Naive thymus-derived CD4-positive, alpha-beta T cell (primary cell): ENCODE measurements at regions of chr10 and their contacts with region 1.

Region 1: DNA sequence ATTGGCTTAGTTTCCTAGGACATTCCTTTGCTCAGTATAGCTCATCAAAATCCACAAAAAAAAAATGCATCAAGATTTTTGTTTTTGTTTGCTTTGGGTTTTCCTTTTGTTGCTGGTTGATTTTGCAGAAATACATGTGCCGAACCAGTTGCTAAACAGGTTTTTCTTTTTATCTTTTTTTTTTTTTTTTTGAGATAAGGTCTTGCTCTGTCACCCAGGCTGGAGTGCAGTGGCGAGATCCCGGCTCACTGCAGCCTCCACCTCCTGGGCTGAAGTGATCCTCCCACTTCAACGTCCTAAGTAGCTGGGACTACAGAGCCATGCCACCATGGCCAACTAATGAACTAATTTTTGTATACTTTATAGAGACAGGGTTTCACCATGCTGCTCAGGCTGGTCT is 8.3 kb downstream of the CSTF2T start:
- DNase-seq: no peak
- ATAC-seq: no peak
- H3K4me3 ChIP-seq: no peak overlapping the region
- H3K4me3 Mint-ChIP-seq: no peak overlapping the region
- H3K27ac ChIP-seq: no peak overlapping the region
- H3K27ac Mint-ChIP-seq: no peak overlapping the region
- H3K4me1 ChIP-seq: peaks cover under 1 to 13% of the 10 kb centered on the region in 2 donors
- H3K4me1 Mint-ChIP-seq: peaks cover 6 to 25% (median 21%) of the 10 kb centered on the region in 7 donors
- H3K27me3 ChIP-seq: no peaks in the 10 kb centered on the region
- H3K27me3 Mint-ChIP-seq: peaks cover 0 to 5% (median 0%) of the 10 kb centered on the region in 5 donors

Region 2: DNA sequence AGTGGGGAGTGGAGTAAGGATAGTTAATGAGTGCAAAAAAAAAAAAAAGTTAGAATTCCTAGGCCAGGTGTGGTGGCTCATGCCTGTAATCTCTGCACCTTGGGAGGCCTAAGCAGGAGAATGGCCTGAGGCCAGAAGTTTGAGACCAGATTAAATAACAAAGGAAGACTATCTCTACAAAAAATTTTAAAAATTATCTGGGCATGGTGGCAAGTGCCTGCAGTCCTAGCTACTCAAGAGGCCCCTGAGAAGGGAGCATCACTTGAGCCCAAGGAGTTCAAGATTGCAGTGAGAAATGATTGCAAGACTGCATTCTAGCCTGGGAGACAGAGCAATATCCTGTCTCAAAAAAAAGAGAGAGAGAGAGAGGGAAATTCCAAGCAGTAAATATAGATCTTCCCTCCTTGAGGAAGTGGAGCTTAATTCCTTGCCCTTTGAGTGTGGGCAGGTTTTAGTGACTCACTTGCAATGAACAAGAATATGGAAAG is 27.7 kb after region 1 on chr10:
- CTCF ChIA-PET with region 1: no interaction called
- POLR2A ChIA-PET with region 1: no interaction called
- intact Hi-C with region 1: no loop called
- DNase-seq: no peak
- ATAC-seq: no peak
- H3K4me3 ChIP-seq: no peak overlapping the region
- H3K4me3 Mint-ChIP-seq: no peak overlapping the region
- H3K27ac ChIP-seq: no peak overlapping the region
- H3K27ac Mint-ChIP-seq: no peak overlapping the region
- H3K4me1 ChIP-seq: no peaks in the 10 kb centered on the region
- H3K4me1 Mint-ChIP-seq: peaks cover 0 to 8% (median 0%) of the 10 kb centered on the region in 7 donors
- H3K27me3 ChIP-seq: no peaks in the 10 kb centered on the region
- H3K27me3 Mint-ChIP-seq: peaks cover 8 to 27% (median 9%) of the 10 kb centered on the region in 5 donors

Region 3: DNA sequence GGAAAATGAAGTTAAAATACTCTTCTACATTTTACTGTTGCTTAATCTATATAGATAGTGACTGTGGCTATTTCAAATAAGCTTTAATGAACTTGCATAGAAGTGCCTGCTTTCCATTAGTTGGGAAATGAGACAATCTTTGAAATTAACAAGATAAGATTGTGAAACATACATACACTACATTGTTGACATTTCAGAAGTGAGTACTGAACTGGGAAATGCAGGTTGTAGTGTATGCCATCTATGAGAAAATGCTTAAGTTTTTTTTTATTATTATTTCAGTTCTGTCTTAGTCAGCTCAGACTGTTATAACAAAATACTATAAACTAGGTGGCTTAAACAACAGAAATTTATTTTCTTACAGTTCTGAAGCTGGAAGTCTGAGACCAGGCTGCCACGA is 57.8 kb after region 1 on chr10:
- CTCF ChIA-PET with region 1: no interaction called
- POLR2A ChIA-PET with region 1: no interaction called
- intact Hi-C with region 1: loop called in 1 of 2 experiments (anchors 5 kb)
- DNase-seq: no peak
- ATAC-seq: no peak
- H3K4me3 ChIP-seq: no peak overlapping the region
- H3K4me3 Mint-ChIP-seq: no peak overlapping the region
- H3K27ac ChIP-seq: no peak overlapping the region
- H3K27ac Mint-ChIP-seq: no peak overlapping the region
- H3K4me1 ChIP-seq: no peaks in the 10 kb centered on the region
- H3K4me1 Mint-ChIP-seq: no peaks in the 10 kb centered on the region
- H3K27me3 ChIP-seq: no peaks in the 10 kb centered on the region
- H3K27me3 Mint-ChIP-seq: peaks cover 0 to 4% (median 0%) of the 10 kb centered on the region in 5 donors

Region 4: DNA sequence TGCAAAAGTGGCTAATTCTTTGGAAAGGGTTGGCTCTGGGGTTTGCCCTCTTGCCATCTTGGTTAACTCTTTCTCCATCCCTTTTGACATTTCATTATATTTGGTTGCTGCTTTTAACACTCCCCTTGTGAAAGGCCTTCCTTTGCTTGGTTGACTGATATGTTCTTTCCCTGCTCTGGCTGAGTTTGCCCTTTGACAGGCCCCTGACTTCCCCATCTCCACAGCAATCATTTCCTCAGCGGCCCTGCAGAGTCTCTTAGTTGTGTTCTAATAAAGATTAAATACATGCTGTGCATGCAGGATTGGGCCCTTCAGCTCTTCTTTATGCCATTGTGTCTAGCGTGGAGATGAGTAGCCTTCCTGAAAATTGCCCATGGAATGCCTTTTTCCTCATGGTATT is 92.8 kb after region 1 on chr10:
- CTCF ChIA-PET with region 1: no interaction called
- POLR2A ChIA-PET with region 1: no interaction called
- intact Hi-C with region 1: no loop called
- DNase-seq: no peak
- ATAC-seq: no peak
- H3K4me3 ChIP-seq: no peak overlapping the region
- H3K4me3 Mint-ChIP-seq: no peak overlapping the region
- H3K27ac ChIP-seq: no peak overlapping the region
- H3K27ac Mint-ChIP-seq: no peak overlapping the region
- H3K4me1 ChIP-seq: no peaks in the 10 kb centered on the region
- H3K4me1 Mint-ChIP-seq: peaks cover 0 to 2% (median 0%) of the 10 kb centered on the region in 7 donors
- H3K27me3 ChIP-seq: no peaks in the 10 kb centered on the region
- H3K27me3 Mint-ChIP-seq: peaks cover 0 to 4% (median 2%) of the 10 kb centered on the region in 5 donors